Colonic mucosa (tissue), 4 donors: ENCODE measurements at regions of chr4 and their contacts with region 1.

Region 1: DNA sequence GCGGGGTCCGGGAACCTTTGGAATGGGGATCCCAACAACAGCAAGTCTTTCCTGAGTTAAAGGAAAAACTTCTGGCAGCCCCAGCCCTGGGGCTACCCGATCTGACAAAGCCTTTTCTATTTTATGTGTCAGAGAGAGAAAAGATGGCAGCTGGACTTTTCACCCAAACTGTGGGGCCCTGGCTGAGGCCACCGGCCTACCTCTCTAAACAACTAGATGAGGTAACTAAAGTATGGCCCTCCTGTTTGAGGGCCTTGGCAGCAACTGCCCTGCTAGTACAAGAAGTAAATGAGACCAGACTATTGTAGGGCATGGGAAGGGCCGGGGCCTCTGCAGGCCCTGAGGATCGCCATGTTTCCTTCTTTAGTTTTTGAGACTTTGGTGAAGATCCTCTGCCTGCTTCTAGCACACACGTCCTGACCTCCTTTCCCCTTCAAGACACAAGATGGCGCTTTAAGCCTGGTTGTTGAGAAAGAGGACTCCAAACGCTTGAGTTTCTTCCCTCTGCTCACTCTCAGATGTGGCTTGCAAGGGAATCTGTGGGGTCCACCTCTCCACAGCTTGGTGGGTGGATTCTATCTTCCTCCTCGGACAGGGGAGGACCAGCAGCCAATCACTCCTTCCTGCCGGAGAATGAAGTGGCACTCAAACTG is 18.5 kb upstream of the DRD5 start:
- DNase-seq: peak; percentile 73
- H3K4me3 ChIP-seq: no peak overlapping the region
- H3K27ac ChIP-seq: no peak overlapping the region
- H3K4me1 ChIP-seq: no peaks in the 10 kb centered on the region
- H3K27me3 ChIP-seq: no peaks in the 10 kb centered on the region
- CTCF ChIP-seq: peak; percentile 60

Region 2: GRCh38 chr4:9898596-9899305 is 135.8 kb after region 1 on chr4:
- intact Hi-C with region 1: loop called (anchors 2 kb)
- DNase-seq: peak; percentile 40
- H3K4me3 ChIP-seq: no peak overlapping the region
- H3K27ac ChIP-seq: no peak overlapping the region
- H3K4me1 ChIP-seq: no peaks in the 10 kb centered on the region
- H3K27me3 ChIP-seq: no peaks in the 10 kb centered on the region
- CTCF ChIP-seq: no peak